Activated CD8-positive, alpha-beta T cell treated with anti-CD3 and anti-CD28 coated beads for 36 hours (primary cell): ENCODE measurements at regions of chr7 and their contacts with region 1.

Region 1: DNA sequence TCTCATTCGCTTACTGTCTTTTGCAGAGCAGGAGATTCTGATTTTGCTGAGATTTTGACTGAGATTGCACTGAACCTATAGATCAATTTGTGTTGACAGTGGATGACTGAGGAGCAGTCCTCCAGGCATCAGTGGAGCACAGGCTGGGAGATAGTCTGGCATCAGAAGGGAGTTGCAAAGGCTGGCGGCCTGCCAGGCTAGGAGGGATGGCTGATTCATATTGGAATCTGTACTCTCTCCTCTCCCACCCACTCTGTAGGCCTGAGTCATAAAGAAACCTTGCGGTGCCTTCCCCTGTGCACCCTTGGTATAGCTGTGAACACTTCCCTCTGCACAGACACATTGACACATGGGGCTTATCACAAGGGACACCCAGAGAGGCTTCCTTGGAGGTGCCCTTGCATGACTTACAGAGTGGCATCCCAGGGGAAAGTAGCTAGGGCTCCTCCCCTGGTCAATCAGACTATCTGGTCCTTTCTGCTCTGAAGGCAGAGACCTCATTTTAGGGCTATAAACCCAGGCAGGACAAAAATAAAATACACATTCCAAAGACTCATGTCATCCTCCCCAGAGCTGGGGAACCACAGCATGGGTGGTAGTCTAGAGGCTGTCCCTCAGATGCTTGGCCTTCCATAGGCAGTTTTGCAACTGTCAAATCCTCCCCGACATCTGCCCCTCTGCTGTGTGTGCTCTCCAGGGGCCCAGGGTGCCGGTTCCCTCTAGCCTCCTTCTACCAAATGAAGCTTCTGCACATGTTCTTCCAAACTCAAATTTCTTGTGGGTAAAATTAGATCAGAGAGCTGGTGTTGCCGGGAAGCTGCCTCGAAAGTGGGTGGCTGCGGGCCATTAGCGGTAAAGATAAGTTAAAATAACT is 37.4 kb upstream of the EEPD1 start:
- DNase-seq: peak; percentile 95
- ATAC-seq: peak; percentile 99
- H3K4me3 Mint-ChIP-seq: no peak overlapping the region
- H3K27ac Mint-ChIP-seq: no peak overlapping the region
- H3K4me1 Mint-ChIP-seq: peaks cover 26% of the 10 kb centered on the region
- H3K27me3 Mint-ChIP-seq: peaks cover 20% of the 10 kb centered on the region
- CTCF ChIP-seq: no peak

Region 2: GRCh38 chr7:35967366-35968139 is 148.1 kb before region 1 on chr7:
- CTCF ChIA-PET with region 1: no interaction called
- POLR2A ChIA-PET with region 1: no interaction called
- intact Hi-C with region 1: no loop called
- DNase-seq: no peak
- ATAC-seq: no peak
- H3K4me3 Mint-ChIP-seq: no peak overlapping the region
- H3K27ac Mint-ChIP-seq: no peak overlapping the region
- H3K4me1 Mint-ChIP-seq: no peaks in the 10 kb centered on the region
- H3K27me3 Mint-ChIP-seq: peaks cover 16% of the 10 kb centered on the region
- CTCF ChIP-seq: no peak

Region 3: DNA sequence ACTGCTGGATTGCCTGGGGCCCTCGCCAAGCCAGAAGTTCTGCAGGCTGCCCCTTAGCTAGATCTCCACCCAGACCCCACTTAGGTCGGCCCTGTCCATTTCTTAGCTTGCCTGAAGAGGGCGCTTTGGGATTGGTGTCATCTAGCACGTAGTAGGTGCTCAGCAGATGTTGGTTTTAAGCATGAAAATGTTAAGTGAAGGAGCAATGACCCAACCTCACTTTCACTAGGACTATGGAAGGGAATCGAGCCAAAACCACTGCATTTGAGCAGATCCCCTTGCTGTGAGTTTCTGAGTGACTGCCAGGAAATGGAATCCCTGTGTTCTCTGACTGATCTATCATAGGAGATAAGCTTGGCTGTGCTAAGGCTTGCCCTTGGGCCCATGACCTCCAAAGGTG is 94.3 kb before region 1 on chr7:
- CTCF ChIA-PET with region 1: no interaction called
- POLR2A ChIA-PET with region 1: no interaction called
- intact Hi-C with region 1: no loop called
- DNase-seq: peak; percentile 15
- ATAC-seq: no peak
- H3K4me3 Mint-ChIP-seq: no peak overlapping the region
- H3K27ac Mint-ChIP-seq: no peak overlapping the region
- H3K4me1 Mint-ChIP-seq: no peaks in the 10 kb centered on the region
- H3K27me3 Mint-ChIP-seq: no peaks in the 10 kb centered on the region
- CTCF ChIP-seq: peak; percentile 17

Region 4: GRCh38 chr7:36075561-36075960 is 40.1 kb before region 1 on chr7:
- CTCF ChIA-PET with region 1: no interaction called
- POLR2A ChIA-PET with region 1: no interaction called
- intact Hi-C with region 1: no loop called
- DNase-seq: no peak
- ATAC-seq: no peak
- H3K4me3 Mint-ChIP-seq: no peak overlapping the region
- H3K27ac Mint-ChIP-seq: no peak overlapping the region
- H3K4me1 Mint-ChIP-seq: no peaks in the 10 kb centered on the region
- H3K27me3 Mint-ChIP-seq: peaks cover 2% of the 10 kb centered on the region
- CTCF ChIP-seq: no peak

Region 5: GRCh38 chr7:36096460-36097095 is 19.1 kb before region 1 on chr7:
- CTCF ChIA-PET with region 1: no interaction called
- POLR2A ChIA-PET with region 1: no interaction called
- intact Hi-C with region 1: no loop called
- DNase-seq: no peak
- ATAC-seq: no peak
- H3K4me3 Mint-ChIP-seq: no peak overlapping the region
- H3K27ac Mint-ChIP-seq: no peak overlapping the region
- H3K4me1 Mint-ChIP-seq: no peaks in the 10 kb centered on the region
- H3K27me3 Mint-ChIP-seq: no peaks in the 10 kb centered on the region
- CTCF ChIP-seq: no peak

Region 6: GRCh38 chr7:36280840-36281812 is 165.4 kb after region 1 on chr7:
- CTCF ChIA-PET with region 1: interaction called, 3 read pairs
- POLR2A ChIA-PET with region 1: no interaction called
- intact Hi-C with region 1: loop called (anchors 10 kb)
- DNase-seq: no peak
- ATAC-seq: no peak
- H3K4me3 Mint-ChIP-seq: no peak overlapping the region
- H3K27ac Mint-ChIP-seq: no peak overlapping the region
- H3K4me1 Mint-ChIP-seq: peaks cover 14% of the 10 kb centered on the region
- H3K27me3 Mint-ChIP-seq: no peaks in the 10 kb centered on the region
- CTCF ChIP-seq: no peak